ENCODE measurements at regions of chr11 and their contacts with region 1.

Region 1: GRCh38 chr11:116853461-116854073 is 16.1 kb upstream of the APOA1 start:
- DNase-seq: no peak
- ATAC-seq: peak; percentile 96
- H3K4me3 Mint-ChIP-seq: peak overlapping the region; percentile 39
- H3K27ac Mint-ChIP-seq: peak overlapping the region; percentile 16
- H3K4me1 Mint-ChIP-seq: peaks cover 55% of the 10 kb centered on the region
- H3K27me3 Mint-ChIP-seq: no peaks in the 10 kb centered on the region
- CTCF ChIP-seq: no peak

Region 2: DNA sequence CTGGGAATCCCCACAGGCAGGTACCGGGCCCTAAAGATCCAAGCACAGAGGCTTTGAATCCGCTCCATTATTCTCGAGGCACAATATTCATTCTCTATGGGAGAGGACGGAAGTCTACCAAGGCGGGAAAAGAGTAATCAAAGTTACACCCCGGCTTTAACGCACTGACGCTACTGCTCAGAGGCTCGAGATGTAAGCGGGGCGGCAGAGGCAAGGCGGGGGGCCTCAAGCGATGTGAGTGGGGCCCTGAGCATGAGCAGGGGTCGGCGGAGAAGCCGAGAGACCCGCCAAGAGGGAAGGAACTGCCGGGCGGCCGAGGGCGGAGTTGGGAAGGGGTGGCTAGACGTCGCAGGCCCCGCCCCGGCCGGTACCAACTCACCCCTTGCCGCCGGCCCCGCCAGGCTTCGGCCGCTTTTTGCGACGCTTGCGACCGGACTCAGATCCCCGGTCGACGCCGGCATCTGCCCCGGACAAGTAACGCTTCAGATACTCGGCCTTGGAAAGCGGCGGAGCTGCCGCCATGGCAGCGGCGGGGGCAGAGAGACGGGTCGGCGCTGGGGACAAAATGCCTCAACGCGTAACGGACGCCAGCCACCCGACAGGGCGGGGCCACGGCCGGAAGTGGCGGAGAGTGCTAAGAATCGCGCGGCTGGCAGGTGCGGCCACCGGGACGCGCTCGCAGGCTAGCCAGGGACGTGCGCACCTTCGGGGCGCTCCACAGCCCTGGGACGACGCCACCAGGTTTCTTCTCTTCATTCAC is 80.9 kb before region 1 on chr11 and contains the start of gene BUD13:
- CTCF ChIA-PET with region 1: no interaction called
- POLR2A ChIA-PET with region 1: no interaction called
- intact Hi-C with region 1: loop called (anchors 5 kb)
- DNase-seq: peak; percentile 96
- ATAC-seq: peak; percentile 89
- H3K4me3 Mint-ChIP-seq: peak within 1 kb of the TSS; percentile 98
- H3K27ac Mint-ChIP-seq: peak within 1 kb of the TSS; percentile 96
- H3K4me1 Mint-ChIP-seq: peaks cover 37% of the 10 kb centered on the region
- H3K27me3 Mint-ChIP-seq: no peaks in the 10 kb centered on the region
- CTCF ChIP-seq: no peak
- total RNA-seq, gene BUD13: 18.4 and 18.8 TPM in 2 replicates

Region 3: DNA sequence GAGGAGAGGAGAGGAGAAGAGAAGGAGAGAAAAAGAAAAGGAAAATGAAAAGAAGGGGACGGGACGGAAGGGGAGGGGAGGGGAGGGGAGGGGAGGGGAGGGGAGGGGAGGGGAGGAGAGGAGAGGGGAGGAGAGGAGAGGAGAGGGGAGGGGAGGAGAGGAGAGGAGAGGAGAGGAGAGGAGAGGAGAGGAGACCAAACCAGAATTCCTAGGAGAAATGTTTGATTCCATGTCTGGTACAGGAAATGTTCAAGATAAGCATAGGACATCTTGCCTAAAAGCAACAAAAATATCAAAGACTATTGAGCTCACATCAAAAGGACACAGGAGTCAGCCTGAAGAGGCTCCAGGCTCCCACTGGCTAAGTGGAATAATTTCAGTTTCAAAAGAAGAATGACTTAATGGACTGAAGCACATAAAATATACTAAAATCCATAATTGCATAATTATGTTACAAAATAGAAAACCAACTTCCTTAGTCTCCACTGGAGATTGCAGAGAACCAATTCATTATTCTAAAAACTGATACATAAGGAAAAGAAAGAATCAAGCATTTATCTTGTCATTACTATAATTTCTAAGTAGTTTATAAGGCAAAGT is 85.0 kb after region 1 on chr11:
- CTCF ChIA-PET with region 1: no interaction called
- POLR2A ChIA-PET with region 1: no interaction called
- intact Hi-C with region 1: no loop called
- DNase-seq: no peak
- ATAC-seq: no peak
- H3K4me3 Mint-ChIP-seq: no peak overlapping the region
- H3K27ac Mint-ChIP-seq: no peak overlapping the region
- H3K4me1 Mint-ChIP-seq: peaks cover 15% of the 10 kb centered on the region
- H3K27me3 Mint-ChIP-seq: no peaks in the 10 kb centered on the region
- CTCF ChIP-seq: no peak